ENCODE measurements at regions of chr5 and their contacts with region 1.

Region 1: DNA sequence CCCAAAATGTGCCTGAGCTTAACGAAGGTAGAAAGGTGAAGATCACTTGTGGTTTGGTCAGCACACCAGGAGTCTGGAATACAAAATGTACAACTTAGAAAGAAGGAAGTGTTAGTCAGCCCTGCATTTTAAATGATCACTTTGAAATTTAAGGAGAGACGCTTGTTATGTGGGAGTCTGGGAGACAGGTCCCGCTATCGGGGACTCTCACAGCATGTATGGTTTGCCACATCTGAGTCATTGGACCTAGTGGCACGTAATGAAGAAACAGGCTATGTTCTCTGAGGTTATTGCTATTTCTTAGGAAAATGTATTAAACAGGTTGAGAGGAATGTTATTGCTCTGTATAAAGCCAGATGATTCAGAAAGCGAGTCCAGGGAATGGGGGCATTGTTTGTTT is 2362.5 kb upstream of the WWC1 start:
- DNase-seq: no peak
- ATAC-seq: no peak
- H3K4me3 ChIP-seq: no peak overlapping the region
- H3K27ac ChIP-seq: no peak overlapping the region
- H3K4me1 ChIP-seq: no peaks in the 10 kb centered on the region
- H3K27me3 ChIP-seq: no peaks in the 10 kb centered on the region
- CTCF ChIP-seq: no peak

Region 2: DNA sequence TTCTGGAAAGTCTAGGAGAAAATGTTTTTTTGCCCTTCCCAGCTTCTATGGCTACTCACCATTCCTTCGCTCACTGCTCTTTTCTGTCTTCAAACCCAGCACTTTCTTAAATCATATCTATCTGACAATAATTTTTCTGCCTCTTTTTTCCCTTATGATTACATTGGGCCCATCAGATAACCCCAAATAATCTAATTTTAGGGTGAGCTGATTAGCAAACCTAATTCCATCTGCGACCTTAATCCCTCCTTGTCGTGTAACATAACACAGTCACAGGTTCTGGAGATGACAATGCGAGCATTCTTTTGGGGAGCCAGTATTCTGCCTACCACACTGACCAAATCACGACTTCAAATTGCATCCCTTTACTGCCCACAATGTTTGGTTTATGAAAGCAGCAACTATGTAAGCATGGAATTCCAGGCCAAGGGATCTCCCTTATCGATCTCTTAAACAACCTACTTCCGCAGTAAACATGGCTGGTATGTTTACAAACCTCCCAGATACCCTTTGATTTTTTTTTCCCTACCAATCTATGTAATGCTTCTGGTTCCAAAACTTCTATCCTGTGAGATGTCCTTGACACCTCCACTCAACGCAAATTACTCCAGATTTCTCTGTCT is 301.3 kb before region 1 on chr5:
- CTCF ChIA-PET with region 1: no interaction called
- POLR2A ChIA-PET with region 1: no interaction called
- in situ Hi-C with region 1: no loop called
- intact Hi-C with region 1: loop called (anchors 5 kb)
- DNase-seq: no peak
- ATAC-seq: no peak
- H3K4me3 ChIP-seq: no peak overlapping the region
- H3K27ac ChIP-seq: no peak overlapping the region
- H3K4me1 ChIP-seq: no peaks in the 10 kb centered on the region
- H3K27me3 ChIP-seq: no peaks in the 10 kb centered on the region
- CTCF ChIP-seq: no peak